Dorsolateral prefrontal cortex (tissue), 120 donors: ENCODE measurements at regions of chr7 and their contacts with region 1.

Region 1: DNA sequence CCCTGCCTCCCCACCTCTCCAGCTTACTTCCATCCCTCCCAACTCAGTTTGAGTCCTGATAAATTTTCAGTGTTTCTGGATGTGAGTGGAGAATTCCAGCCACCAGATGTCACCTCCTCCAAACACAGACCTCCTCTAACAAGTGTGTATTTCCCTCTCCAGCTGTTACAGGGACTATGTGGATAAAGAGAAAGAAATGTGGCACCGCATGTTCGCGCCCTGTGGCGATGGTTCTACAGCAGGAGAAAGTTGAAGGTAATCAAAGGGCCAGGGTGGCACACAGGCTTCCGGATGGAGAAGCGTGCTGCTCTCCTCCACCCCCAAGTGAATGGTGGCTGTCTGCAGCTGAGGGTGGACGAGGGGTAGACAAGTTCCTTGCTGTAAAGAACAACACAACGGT is 14.7 kb downstream of the FKBP6 start:
- DNase-seq: peak in 1 of 10 donors; percentile 19
- H3K4me3 ChIP-seq: peak overlapping the region in 27 of 59 donors; percentile 8 to 51 (median 29)
- H3K27ac ChIP-seq: no peak overlapping the region
- H3K27me3 ChIP-seq: no peaks in the 10 kb centered on the region
- CTCF ChIP-seq: peak; percentile 9 to 78 (median 54)

Region 2: GRCh38 chr7:73433924-73434700 is 91.5 kb after region 1 on chr7:
- intact Hi-C with region 1: loop called in 1 of 2 experiments (anchors 5 kb)
- DNase-seq: peak in 2 of 10 donors; percentile 39 to 52
- H3K4me3 ChIP-seq: peak overlapping the region; percentile 20 to 67 (median 50)
- H3K27ac ChIP-seq: peak overlapping the region in 2 of 59 donors; percentile 13 to 22
- H3K27me3 ChIP-seq: peaks cover 0 to 2% (median 0%) of the 10 kb centered on the region in 45 donors
- CTCF ChIP-seq: peak in 1 of 56 donors; percentile 0

Region 3: GRCh38 chr7:73442903-73443500 is 100.4 kb after region 1 on chr7:
- intact Hi-C with region 1: loop called in 1 of 2 experiments (anchors 5 kb)
- DNase-seq: no peak
- H3K4me3 ChIP-seq: no peak overlapping the region
- H3K27ac ChIP-seq: peak overlapping the region in 7 of 59 donors; percentile 1 to 51 (median 13)
- H3K27me3 ChIP-seq: no peaks in the 10 kb centered on the region
- CTCF ChIP-seq: no peak

Region 4: DNA sequence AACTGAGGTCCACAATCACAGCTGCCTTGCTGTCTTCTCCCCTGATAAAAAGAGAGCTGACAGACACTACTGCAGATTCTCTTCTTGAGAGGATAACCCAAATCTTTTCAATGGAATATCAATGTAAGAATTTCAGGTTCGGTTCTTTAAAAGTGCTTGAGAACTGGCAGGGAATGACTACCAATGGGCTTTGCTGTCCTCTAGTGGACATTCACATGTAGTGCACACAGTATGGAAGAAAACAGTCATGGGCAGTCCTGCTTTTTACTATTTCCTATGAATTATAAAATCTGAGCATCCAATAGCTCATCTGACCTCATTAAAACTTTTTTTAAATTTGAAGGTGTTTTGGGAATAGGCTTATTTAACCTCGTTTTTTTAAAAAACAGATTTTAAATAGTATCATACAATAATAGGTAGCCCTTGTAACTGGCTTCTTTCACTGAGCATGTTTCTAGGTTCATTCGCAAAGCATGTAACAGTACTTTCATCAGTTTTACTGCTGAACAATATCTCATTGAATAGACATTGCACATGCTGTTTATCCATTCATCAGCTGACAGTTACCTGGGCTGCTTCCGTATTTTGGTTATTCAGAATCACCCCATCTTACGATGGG is 109.2 kb after region 1 on chr7:
- intact Hi-C with region 1: loop called in 1 of 2 experiments (anchors 1 kb)
- DNase-seq: peak in 1 of 10 donors; percentile 35
- H3K4me3 ChIP-seq: no peak overlapping the region
- H3K27ac ChIP-seq: peak overlapping the region in 5 of 59 donors; percentile 2 to 60 (median 29)
- H3K27me3 ChIP-seq: no peaks in the 10 kb centered on the region
- CTCF ChIP-seq: peak; percentile 93 to 100 (median 99)